ENCODE measurements at regions of chr19 and their contacts with region 1.

Region 1: GRCh38 chr19:43747557-43748204 is 7.1 kb downstream of the SMG9 start:
- DNase-seq: no peak
- ATAC-seq: no peak
- H3K4me3 ChIP-seq: no peak overlapping the region
- H3K27ac ChIP-seq: no peak overlapping the region
- H3K4me1 ChIP-seq: peaks cover 8 to 39% of the 10 kb centered on the region in 2 donors
- H3K27me3 ChIP-seq: no peaks in the 10 kb centered on the region
- CTCF ChIP-seq: no peak

Region 2: GRCh38 chr19:43784981-43785808 is 37.5 kb after region 1 on chr19:
- intact Hi-C with region 1: loop called in 1 of 2 experiments (anchors 5 kb)
- DNase-seq: peak; percentile 39 to 70 (median 62)
- ATAC-seq: peak; percentile 90
- H3K4me3 ChIP-seq: no peak overlapping the region
- H3K27ac ChIP-seq: peak overlapping the region in 1 of 2 donors; percentile 33
- H3K4me1 ChIP-seq: peaks cover 0 to 25% of the 10 kb centered on the region in 2 donors
- H3K27me3 ChIP-seq: peaks cover 0 to 16% of the 10 kb centered on the region in 2 donors
- CTCF ChIP-seq: peak; percentile 95 to 99